IMR-90 (cell line): ENCODE measurements at regions of chr1 and their contacts with region 1.

Region 1: DNA sequence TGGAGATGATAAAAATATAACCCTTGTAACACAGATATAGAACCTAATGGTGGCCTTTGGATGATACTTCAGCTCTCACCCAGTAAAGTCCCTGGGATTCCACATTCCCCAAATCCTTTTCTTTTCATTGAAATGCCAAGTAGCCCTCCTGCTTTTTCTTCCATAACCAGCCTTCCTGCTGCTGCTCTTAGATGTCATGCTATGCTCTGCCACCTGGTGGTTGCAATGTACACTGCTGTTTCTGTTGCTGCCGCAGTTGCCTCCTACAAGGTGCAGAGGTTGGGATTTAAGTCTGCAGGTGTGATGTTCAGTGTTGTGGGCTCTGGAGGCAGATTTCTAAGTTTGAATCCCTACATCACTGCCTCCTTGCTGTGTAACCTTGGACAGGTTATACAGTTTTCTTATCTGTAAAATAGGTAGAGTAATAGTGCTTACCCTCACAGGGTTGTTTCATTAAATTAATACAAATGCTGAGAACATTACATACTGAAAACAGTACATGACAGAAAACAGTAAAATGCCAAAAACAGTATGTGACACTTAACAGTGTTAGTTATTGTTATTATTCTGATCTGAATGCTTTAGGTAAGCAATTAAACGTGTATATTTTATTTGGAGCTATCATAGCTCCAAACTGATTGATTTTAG is 64.3 kb downstream of the CAMSAP2 start:
- DNase-seq: peak; percentile 84
- ATAC-seq: peak; percentile 99
- H3K4me3 ChIP-seq: no peak overlapping the region
- H3K27ac ChIP-seq: no peak overlapping the region
- H3K4me1 ChIP-seq: no peaks in the 10 kb centered on the region
- H3K27me3 ChIP-seq: no peaks in the 10 kb centered on the region
- CTCF ChIP-seq: peak; percentile 89
- POLR2A ChIP-seq: no peak
- RAD21 ChIP-seq: peak; percentile 91

Region 2: DNA sequence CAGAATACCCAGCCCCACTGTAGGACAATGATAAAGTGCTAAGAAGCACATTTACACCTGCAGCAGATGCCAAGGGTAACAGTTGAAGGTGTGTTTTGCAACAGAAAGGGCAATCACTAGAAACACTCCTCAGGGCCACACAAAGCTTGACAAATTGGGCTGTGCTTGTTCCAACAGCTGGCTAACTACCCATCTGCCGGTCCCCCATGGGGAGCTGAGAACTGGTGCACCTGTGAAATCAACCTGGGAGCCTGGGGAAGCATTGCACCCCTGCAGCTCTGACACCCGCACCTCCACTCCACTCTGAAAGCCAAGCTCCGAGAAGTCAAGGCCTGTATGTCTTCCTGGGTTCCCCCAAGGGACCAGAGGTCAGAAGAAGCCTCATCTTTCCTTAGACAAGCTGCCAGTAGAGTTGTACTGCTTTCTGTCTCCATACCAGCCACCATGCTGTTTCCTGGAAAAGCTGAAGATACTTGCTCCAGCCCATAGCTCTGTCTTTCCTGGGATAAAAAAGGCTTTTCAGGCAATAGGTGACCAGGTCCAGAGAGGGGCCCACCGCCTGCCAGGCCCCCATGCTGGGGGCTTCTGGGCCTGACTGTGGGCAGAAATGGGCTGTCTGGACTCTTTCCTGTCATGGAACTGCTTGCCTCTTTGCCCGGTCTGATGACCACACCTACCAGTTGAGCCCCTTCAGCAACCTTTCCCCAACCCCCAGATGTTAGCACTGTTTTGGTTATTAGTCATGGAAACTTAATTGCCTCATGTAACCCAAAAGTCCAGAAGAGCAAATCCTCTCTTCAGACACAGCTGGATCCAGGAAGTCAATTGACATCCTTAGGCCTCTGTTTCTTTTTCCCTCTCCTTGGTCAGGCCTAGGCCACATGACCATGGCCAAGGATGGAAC is 276.0 kb before region 1 on chr1:
- CTCF ChIA-PET with region 1: no interaction called
- POLR2A ChIA-PET with region 1: no interaction called
- dilution Hi-C with region 1: no loop called
- in situ Hi-C with region 1: no loop called
- intact Hi-C with region 1: no loop called
- DNase-seq: peak; percentile 41
- ATAC-seq: no peak
- H3K4me3 ChIP-seq: no peak overlapping the region
- H3K27ac ChIP-seq: no peak overlapping the region
- H3K4me1 ChIP-seq: peaks cover 6% of the 10 kb centered on the region; the same call in 1 of the 2 replicates
- H3K27me3 ChIP-seq: peaks cover 4% of the 10 kb centered on the region
- CTCF ChIP-seq: no peak
- POLR2A ChIP-seq: no peak
- RAD21 ChIP-seq: no peak

Region 3: DNA sequence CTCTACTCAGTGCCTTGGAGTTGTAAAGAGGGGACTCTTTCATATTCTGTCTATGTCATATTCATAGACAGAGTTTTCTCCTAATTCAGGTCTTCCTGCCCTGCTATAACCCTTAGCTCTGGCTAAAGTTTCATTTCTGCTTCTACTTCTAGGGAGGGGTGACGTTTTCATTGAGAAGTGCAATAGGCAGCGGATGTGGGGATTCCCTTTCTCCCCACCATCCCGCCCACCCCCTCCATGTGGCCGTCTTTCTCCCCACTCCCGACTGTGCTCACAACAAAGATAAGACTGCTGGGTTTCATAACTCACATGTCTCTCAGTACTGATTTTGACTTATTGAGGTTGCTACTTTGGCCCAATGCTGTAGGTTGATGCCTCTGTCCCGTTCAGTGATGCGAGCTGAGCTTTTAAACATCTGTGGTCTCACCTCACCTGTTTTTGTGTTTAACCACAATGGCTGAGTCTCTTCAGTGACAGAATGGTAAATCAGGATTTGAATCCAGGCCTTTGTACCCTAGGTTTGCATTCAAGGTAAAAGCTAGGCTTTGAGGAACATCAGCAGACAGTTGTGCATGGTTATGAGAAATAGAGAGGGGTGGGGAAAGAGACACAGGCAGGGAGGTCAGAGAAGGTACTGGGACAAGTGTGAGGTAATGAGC is 174.6 kb before region 1 on chr1:
- CTCF ChIA-PET with region 1: no interaction called
- POLR2A ChIA-PET with region 1: no interaction called
- dilution Hi-C with region 1: no loop called
- in situ Hi-C with region 1: loop called (anchors 5 kb)
- intact Hi-C with region 1: no loop called
- DNase-seq: no peak
- ATAC-seq: no peak
- H3K4me3 ChIP-seq: no peak overlapping the region
- H3K27ac ChIP-seq: no peak overlapping the region
- H3K4me1 ChIP-seq: no peaks in the 10 kb centered on the region; the same call in 1 of the 2 replicates
- H3K27me3 ChIP-seq: no peaks in the 10 kb centered on the region; the same call in 1 of the 2 replicates
- CTCF ChIP-seq: no peak
- POLR2A ChIP-seq: no peak
- RAD21 ChIP-seq: no peak

Region 4: DNA sequence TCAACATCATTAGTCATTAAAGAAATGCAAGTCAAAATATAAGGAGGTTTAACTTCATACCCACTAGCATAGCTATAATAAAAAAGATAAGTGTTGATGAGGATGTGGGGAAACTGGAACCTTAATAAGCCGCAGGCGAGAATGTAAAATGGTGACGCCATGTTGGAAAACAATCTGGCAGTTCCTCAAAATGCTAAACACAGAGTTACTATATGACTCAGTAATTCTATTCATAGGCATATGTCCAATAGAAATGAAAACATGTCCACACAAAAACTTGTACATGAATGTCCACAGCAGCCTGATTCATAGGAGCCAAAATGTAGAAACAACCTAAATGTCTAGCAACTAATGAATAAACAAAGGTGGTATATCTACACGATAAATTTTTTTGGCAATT is 156.5 kb before region 1 on chr1:
- CTCF ChIA-PET with region 1: no interaction called
- POLR2A ChIA-PET with region 1: no interaction called
- dilution Hi-C with region 1: no loop called
- in situ Hi-C with region 1: no loop called
- intact Hi-C with region 1: no loop called
- DNase-seq: no peak
- ATAC-seq: no peak
- H3K4me3 ChIP-seq: no peak overlapping the region
- H3K27ac ChIP-seq: no peak overlapping the region
- H3K4me1 ChIP-seq: no peaks in the 10 kb centered on the region
- H3K27me3 ChIP-seq: no peaks in the 10 kb centered on the region
- CTCF ChIP-seq: no peak
- POLR2A ChIP-seq: no peak
- RAD21 ChIP-seq: no peak

Region 5: DNA sequence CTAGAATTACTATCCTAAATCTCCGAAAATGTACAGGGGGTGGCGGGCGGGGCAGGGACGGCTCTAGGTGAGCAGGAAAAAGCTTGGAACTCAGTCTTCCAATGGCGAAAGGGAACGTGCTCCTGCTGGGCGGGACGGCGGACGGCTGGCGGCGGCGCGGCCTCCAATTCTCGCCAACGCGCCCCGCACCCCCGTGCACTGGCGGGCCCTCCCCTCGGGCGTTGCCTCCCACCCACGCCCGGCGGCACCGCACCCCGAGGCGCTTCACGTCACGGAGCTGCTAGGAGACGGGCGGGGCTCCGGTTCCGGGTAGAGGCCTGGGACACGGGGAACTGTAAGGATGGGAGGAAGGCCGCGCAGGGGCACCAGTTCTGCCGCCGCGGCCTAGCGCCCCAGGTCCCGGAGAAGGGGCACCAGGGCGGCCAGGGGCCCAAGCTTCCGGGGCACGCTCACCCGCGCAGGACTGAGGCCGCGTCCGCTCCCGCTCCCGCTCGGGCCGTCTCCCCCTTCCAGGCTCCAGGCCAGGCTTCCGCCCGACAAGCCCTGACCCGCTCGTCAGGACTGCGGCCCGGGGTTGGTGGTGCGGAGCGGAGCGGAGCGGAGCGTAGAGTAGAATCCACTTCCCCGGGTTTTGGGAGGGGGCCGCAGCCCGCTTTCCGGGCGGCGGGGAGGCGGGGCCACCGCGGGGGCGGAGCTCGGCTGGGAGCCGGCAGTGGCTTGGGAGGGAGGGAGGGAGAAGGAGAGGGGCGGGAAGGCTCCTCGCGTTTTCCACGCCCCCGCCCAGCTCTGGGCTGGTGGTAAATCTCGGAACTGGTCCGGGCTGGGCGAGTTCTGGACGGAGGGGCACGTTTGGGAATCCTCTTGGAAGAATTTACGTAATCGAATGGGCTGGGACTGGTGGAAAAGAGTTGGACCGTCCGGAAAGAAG is 133.4 kb before region 1 on chr1 and contains the start of gene DDX59:
- CTCF ChIA-PET with region 1: interaction called, 3 read pairs
- POLR2A ChIA-PET with region 1: no interaction called
- dilution Hi-C with region 1: no loop called
- in situ Hi-C with region 1: no loop called
- intact Hi-C with region 1: loop called (anchors 5 kb)
- DNase-seq: peak; percentile 96
- ATAC-seq: peak; percentile 91
- H3K4me3 ChIP-seq: peak within 1 kb of the TSS; percentile 76
- H3K27ac ChIP-seq: peak within 1 kb of the TSS; percentile 87
- H3K4me1 ChIP-seq: peaks cover 3% of the 10 kb centered on the region; the same call in 1 of the 2 replicates
- H3K27me3 ChIP-seq: no peaks in the 10 kb centered on the region
- CTCF ChIP-seq: no peak
- POLR2A ChIP-seq: peak; percentile 97
- RAD21 ChIP-seq: no peak; the same call in 1 of the 2 replicates
- total RNA-seq, gene DDX59: 9.1 and 11.1 TPM in 2 replicates

Region 6: DNA sequence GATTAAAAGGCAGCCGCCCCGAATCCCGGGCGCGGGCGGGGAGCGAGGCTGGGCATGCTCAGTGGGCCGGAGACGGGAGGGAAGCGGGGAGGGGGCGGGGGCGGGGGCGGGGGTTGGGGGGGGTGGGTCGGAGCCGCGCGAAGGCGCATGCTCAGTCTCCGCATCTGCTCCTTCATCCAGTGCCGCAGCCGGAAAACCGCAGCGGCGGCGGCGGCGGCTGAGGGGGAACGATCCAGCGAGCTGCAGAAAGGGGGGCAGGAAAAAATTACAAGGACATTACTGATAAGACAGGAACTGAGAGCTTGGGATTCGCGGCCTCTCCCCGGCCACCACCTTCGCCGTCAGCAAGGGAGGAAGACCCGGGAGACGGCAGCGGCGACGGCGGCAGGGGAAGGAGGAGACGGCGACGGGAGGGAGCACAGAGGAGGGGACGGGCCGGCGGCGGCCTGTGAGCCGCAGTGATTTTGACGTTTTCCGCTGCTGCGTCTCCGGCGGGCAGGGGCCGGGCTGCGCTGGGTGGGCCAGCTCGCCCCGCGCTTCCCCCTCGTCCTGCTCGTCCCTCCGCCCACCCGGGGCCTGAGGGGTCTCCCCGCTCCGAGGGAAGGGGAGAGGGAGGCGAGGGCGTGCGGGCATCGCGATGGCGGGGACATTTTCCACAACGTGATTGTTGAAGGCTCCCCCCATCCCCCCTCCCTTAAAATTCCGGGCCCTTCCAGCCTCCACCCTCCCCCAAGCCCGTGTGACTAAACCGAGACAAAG is 64.1 kb before region 1 on chr1 and contains the start of gene CAMSAP2:
- CTCF ChIA-PET with region 1: interaction called, 3 read pairs
- POLR2A ChIA-PET with region 1: no interaction called
- dilution Hi-C with region 1: no loop called
- in situ Hi-C with region 1: no loop called
- intact Hi-C with region 1: loop called (anchors 2 kb)
- DNase-seq: peak; percentile 86
- ATAC-seq: peak; percentile 83
- H3K4me3 ChIP-seq: peak within 1 kb of the TSS; percentile 96
- H3K27ac ChIP-seq: peak within 1 kb of the TSS; percentile 100
- H3K4me1 ChIP-seq: no peaks in the 10 kb centered on the region; the same call in 1 of the 2 replicates
- H3K27me3 ChIP-seq: no peaks in the 10 kb centered on the region
- CTCF ChIP-seq: no peak
- POLR2A ChIP-seq: peak; percentile 79
- RAD21 ChIP-seq: no peak
- total RNA-seq, gene CAMSAP2: 29.4 and 43.0 TPM in 2 replicates

Region 7: DNA sequence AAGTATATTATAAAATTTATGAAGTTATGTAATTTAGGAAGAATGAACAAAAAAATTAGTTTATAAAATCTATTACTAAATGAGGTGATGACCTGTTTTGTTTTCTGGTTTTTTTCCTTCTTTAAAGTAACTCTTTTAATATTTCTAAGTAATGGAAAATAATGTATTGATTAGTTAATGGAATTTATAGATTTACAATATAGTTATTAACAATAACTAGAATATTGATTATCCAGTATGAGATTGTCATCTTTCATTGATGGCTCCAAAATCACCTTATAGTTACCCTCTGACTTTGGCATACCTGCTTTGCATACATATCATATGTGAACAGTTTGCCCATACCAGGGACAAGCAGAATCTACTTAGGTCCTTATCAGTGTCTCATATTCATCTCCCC is 40.9 kb before region 1 on chr1:
- CTCF ChIA-PET with region 1: no interaction called
- POLR2A ChIA-PET with region 1: no interaction called
- dilution Hi-C with region 1: no loop called
- in situ Hi-C with region 1: no loop called
- intact Hi-C with region 1: loop called (anchors 5 kb)
- DNase-seq: no peak
- ATAC-seq: no peak
- H3K4me3 ChIP-seq: no peak overlapping the region
- H3K27ac ChIP-seq: no peak overlapping the region
- H3K4me1 ChIP-seq: no peaks in the 10 kb centered on the region
- H3K27me3 ChIP-seq: no peaks in the 10 kb centered on the region
- CTCF ChIP-seq: no peak
- POLR2A ChIP-seq: no peak
- RAD21 ChIP-seq: no peak